ENCODE measurements at regions of chr1 and their contacts with region 1.

Region 1: DNA sequence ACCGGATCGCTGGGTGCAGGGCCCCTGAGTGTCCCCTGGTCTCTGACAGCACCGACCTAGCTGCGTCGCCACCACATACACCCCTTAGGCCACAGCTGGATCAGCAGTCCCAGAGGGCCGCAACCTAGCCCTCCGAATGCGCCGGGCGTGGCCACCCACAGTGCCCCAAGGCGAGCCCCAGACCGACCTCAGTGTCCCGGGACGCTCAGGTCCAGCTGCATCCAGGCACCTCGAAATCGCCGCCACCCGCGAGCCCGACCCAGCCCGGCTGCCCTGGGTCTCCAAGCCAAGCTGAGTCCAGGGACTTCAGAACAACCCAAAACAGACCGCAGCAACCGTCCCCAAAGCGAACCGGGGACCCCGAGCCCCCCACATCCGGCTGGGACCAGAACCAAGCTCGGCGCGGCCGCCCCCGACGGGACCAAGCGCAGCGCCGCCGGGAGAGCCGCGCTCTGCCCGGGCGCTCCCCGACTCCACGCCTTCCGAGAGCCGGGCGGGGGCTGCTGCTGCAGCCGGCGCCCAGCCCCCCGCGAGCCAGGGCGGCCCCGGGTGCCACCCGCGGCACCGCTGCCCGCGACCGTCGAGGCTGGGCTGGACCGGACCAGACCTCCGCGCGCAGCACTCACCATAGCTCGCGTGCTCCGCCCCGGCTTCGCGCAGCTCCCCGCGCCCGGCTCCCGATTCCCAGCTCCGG is 54.6 kb upstream of the ECE1 start:
- DNase-seq: peak; percentile 36 to 77
- H3K4me3 ChIP-seq: peak overlapping the region; percentile 81 to 88
- H3K27ac ChIP-seq: peak overlapping the region; percentile 95 to 96
- H3K4me1 ChIP-seq: peaks cover 0 to 50% (median 36%) of the 10 kb centered on the region in 4 donors
- H3K27me3 ChIP-seq: no peaks in the 10 kb centered on the region
- CTCF ChIP-seq: no peak

Region 2: GRCh38 chr1:21251773-21252471 is 93.0 kb before region 1 on chr1:
- intact Hi-C with region 1: loop called (anchors 2 kb)
- DNase-seq: peak; percentile 88 to 90
- H3K4me3 ChIP-seq: no peak overlapping the region
- H3K27ac ChIP-seq: peak overlapping the region; percentile 80 to 81
- H3K4me1 ChIP-seq: peaks cover 0 to 47% (median 25%) of the 10 kb centered on the region in 4 donors
- H3K27me3 ChIP-seq: no peaks in the 10 kb centered on the region
- CTCF ChIP-seq: no peak

Measured in tibial artery (tissue), 4 donors.